RWPE1 (cell line): ENCODE measurements at regions of chr17 and their contacts with region 1.

Region 1: GRCh38 chr17:534071-534691 is 180.5 kb downstream of the VPS53 start:
- DNase-seq: no peak
- H3K27ac ChIP-seq: no peak overlapping the region
- CTCF ChIP-seq: no peak

Region 2: GRCh38 chr17:418421-418751 is 115.8 kb before region 1 on chr17:
- CTCF ChIA-PET with region 1: no interaction called
- POLR2A ChIA-PET with region 1: no interaction called
- DNase-seq: no peak
- H3K27ac ChIP-seq: no peak overlapping the region
- CTCF ChIP-seq: no peak

Region 3: DNA sequence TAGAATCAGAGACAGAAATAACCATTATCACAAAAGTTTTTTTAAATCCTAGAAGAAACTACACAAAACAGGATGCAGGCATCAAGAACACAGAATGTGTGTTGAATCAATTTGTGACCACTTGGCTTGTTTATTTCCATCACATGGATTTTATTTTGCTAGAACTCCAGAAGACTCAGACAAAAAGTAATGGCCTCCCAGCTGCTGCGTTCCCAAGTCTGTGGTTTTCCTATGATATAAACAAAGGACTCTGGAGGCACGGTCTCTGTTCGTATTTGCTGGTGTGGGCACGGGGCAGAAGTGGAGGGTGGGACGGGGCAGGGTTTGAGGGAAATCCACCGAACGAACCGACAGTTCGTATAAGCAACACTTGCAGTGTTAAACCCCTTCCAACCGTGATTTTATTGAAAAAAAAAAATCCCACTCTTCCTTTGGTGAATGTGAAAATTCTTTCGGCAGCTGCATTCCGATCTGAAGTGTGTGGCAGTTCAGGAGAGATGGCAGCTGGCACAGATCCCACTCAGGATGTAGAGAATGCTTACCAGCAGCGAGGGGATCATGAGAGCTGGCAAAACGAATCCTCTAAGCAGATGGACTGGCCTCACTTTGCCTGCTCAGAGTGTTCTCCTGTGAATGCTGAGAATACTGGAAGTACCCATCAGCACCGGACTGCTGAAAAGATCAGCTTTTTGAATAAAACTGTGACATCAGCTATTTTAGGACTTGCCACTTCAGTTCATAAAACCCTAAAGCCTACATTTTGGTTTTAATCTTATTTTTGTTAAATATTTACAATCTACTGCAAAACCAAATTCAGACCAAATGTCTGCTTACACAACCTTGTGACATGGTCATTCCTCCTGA is 15.2 kb after region 1 on chr17:
- CTCF ChIA-PET with region 1: interaction called, 12 read pairs
- POLR2A ChIA-PET with region 1: no interaction called
- DNase-seq: no peak
- H3K27ac ChIP-seq: no peak overlapping the region
- CTCF ChIP-seq: no peak

Region 4: DNA sequence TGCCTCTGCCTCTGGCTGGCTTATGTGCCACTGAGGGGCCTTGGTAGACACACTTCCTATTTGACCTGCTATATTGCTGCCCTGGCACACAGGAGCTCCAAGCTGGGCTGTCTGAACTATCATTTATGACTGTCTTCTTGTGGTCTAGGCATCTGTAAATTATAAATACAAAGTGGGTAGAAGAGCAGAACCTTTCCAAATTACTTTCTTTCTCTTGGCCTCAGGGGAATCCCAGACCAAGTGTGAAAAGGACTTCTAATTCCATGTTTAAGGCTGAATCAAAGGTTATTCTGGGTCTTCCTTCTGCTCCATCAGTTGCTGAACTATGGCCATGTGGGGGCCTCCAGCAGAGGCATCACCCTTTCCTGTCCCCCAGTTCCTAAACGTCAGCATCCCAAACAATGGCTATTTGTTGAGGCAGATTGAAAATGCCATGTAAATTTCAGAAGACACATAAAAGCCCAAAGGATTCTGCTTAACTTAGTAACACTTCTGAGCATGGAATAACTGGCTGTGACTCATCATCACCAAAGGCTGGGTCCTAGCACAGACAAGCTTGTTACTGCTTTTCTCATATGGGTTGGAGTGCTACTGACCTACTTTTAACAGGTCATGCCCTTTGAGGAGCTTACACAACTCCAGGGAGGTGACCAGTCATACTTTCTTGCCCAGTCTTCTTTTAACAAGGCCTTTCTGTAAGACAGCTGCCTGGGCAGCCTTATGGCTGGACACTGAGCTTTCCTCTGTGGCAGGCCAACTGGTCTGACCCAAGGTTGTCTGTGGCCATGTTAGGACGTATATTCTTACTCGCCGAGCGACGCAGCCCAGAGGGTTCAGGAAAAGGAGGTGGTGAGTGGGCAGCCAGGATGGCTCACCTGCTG is 25.6 kb after region 1 on chr17:
- CTCF ChIA-PET with region 1: no interaction called
- POLR2A ChIA-PET with region 1: no interaction called
- DNase-seq: peak; percentile 62
- H3K27ac ChIP-seq: no peak overlapping the region
- CTCF ChIP-seq: no peak

Region 5: DNA sequence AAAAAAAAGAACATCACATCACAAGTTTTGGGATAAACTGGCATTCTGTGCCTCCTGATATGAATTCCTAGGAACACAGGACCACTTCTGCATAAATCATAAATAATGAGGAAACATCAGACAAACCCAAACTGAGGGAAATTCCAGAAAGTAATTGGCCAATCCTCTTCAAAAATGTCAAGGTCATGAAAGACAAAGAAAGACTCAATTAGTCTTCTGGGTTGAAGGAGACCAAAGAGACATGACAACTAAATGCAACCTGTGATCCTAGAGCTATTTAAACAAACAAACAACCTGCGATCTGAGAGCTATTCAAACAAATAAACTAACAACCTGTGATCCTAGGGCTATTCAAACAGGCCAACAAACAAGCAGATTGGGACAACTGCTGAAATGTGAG is 36.2 kb after region 1 on chr17:
- CTCF ChIA-PET with region 1: no interaction called
- POLR2A ChIA-PET with region 1: no interaction called
- DNase-seq: no peak
- H3K27ac ChIP-seq: no peak overlapping the region
- CTCF ChIP-seq: no peak

Region 6: GRCh38 chr17:640436-640835 is 106.3 kb after region 1 on chr17:
- CTCF ChIA-PET with region 1: no interaction called
- POLR2A ChIA-PET with region 1: no interaction called
- DNase-seq: no peak
- H3K27ac ChIP-seq: no peak overlapping the region
- CTCF ChIP-seq: no peak